ENCODE measurements at regions of chr6 and their contacts with region 1.

Region 1: DNA sequence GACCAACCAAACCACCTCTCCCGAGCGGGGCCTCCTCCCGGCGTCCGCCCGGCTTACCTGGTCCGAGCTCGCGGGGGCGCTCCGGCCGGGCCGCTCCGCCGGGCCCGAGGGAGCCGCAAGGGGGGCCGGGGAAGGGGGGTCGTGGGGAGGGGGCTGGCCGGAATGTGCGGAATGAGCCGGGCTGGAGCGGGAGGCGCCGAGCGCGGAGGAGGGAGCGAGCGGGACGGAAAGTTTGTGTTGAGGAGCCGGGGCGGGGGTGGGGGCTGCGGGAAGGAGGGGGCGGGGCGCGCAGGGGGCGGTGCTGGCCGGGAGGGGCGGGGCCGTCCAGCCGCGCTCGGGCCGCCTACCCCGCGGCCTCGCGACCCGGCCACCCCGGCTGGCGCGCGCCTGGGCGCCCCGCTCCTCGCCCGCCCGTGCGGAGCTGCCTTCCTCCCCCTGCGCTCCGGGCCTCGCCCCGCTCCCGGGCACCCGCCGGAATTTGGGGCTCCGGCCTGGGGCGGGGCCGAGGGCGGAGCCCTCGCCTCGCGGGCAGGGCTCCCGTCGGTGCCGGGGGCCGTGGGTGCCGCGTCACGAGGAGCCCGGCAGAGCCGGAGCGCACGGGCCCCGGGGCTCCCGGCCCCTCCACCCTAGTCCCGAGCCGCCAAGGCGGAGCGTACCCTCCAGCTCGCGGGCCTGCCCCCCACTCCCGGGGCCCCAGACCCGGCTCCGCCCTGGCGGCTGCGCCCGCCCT is at the start of gene TEAD3:
- DNase-seq: peak in 1 of 2 donors; percentile 80
- H3K4me3 ChIP-seq: peak within 1 kb of the TSS; percentile 96 to 99
- H3K27ac ChIP-seq: peak within 1 kb of the TSS; percentile 92 to 100
- H3K4me1 ChIP-seq: peaks cover 0 to 56% (median 44%) of the 10 kb centered on the region in 4 donors
- H3K27me3 ChIP-seq: no peaks in the 10 kb centered on the region
- CTCF ChIP-seq: no peak

Region 2: GRCh38 chr6:35146453-35146852 is 350.6 kb before region 1 on chr6:
- intact Hi-C with region 1: no loop called
- DNase-seq: peak; percentile 41 to 80
- H3K4me3 ChIP-seq: no peak overlapping the region
- H3K27ac ChIP-seq: peak overlapping the region in 1 of 2 donors; percentile 29
- H3K4me1 ChIP-seq: peaks cover 0 to 29% (median 14%) of the 10 kb centered on the region in 4 donors
- H3K27me3 ChIP-seq: no peaks in the 10 kb centered on the region
- CTCF ChIP-seq: peak; percentile 79 to 80

Region 3: DNA sequence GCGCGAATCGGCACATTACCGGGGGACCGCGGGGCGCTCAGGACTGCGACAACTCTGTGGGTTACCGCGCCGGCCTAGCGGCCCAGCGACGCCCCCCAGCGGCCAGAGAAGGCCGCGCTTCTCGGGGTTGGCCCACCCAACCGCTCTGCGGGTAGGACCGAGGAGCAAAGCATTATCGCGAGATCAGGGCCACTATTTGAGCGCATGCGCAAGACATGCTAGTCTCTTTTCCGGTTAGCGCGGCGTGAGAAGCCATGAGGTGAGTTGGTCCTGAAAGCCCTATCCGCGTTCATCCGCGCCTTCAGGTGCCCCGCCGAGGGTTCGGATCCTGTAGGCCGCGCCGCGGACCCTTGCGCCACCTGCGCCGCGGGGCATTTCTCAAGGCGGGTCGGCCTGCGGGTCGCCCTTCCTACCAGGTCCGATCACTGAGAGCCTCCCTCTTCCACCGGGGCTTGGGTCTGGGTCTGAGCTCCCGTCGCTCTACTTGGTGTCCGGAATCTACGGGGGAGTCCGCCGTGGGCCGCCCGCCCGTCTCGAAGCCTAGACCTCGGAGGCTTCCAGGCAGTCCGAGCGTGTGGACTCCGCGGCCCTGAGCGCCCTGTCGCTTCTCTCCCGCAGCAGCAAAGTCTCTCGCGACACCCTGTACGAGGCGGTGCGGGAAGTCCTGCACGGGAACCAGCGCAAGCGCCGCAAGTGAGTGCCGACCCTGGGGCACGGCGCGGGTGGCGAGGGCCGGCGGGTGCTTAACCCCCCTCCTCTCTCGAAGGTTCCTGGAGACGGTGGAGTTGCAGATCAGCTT is 28.6 kb before region 1 on chr6 and contains the start of gene RPL10A:
- intact Hi-C with region 1: loop called (anchors 2 kb)
- DNase-seq: peak; percentile 93 to 98
- H3K4me3 ChIP-seq: peak within 1 kb of the TSS; percentile 63 to 80
- H3K27ac ChIP-seq: peak within 1 kb of the TSS; percentile 83 to 86
- H3K4me1 ChIP-seq: peaks cover 0 to 44% (median 26%) of the 10 kb centered on the region in 4 donors
- H3K27me3 ChIP-seq: no peaks in the 10 kb centered on the region
- CTCF ChIP-seq: peak; percentile 96 to 98

Measured in tibial artery (tissue), 4 donors.